Mammary epithelial cell (primary cell): ENCODE measurements at regions of chr5 and their contacts with region 1.

Region 1: DNA sequence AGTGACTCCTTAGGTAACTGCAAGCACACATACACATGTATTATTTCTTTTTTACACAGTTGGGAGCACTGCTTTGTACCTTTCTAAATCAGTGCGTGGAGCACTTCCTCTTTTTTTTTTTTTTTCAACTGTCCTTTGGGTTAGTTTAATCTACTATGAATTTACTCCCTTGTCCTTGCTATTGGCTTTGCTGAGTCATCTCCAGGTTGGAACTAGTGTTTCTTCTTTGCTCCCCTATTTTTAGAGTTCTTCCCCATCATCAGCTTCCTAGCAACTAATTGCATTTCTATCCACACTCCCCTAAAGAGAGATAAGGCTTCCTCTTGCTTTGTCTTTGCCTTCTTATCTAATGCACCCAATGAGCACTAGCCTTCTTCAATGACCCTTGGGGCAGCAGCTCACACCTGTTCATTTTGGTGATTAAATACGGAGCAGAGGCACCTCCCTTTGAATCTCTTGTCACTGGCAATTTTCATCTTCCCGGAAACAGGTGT is 24.3 kb downstream of the S100Z start:
- DNase-seq: no peak
- H3K4me3 ChIP-seq: no peak overlapping the region
- H3K27ac ChIP-seq: no peak overlapping the region
- H3K4me1 ChIP-seq: no peaks in the 10 kb centered on the region
- H3K27me3 ChIP-seq: peaks cover 3% of the 10 kb centered on the region
- CTCF ChIP-seq: no peak

Region 2: DNA sequence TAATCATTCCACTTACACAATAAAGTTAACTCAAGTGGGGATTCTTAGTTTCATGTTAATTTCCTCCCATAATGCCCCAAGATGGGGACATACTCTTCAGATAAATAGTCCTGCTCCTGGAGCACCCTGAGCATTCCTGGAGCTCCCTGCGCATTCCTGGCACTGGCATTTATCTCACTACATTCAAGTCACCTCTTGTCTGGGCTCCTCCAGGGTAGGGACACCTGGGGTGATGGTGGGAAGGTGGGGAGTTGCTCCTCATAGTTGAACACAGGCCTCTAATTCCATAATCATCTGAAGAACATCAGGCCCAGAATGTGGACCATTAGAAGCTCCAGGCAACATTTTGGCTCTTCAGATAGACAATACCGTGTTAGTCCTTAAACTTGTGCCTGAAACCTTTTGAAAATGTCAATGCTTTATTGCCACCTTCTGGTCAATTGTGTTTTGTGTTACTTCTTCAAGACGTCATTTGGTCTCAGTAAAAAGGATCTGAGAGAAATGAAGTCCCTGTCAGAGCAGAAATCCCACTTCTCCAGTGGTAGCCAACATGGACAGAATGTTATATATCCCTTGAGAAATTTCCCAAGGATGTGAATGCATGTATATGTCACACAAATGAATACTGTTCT is 141.9 kb after region 1 on chr5:
- CTCF ChIA-PET with region 1: no interaction called
- dilution Hi-C with region 1: no loop called
- in situ Hi-C with region 1: loop called (anchors 5 kb)
- intact Hi-C with region 1: no loop called
- DNase-seq: peak; percentile 37
- H3K4me3 ChIP-seq: no peak overlapping the region
- H3K27ac ChIP-seq: no peak overlapping the region
- H3K4me1 ChIP-seq: no peaks in the 10 kb centered on the region
- H3K27me3 ChIP-seq: no peaks in the 10 kb centered on the region
- CTCF ChIP-seq: peak in 1 of 2 donors; percentile 44